Stomach (tissue), 19 donors: ENCODE measurements at regions of chr6 and their contacts with region 1.

Region 1: GRCh38 chr6:131116749-131117360 is 18.4 kb upstream of the AKAP7 start:
- DNase-seq: peak in 1 of 2 donors; percentile 53
- H3K4me3 ChIP-seq: no peak overlapping the region
- H3K27ac ChIP-seq: no peak overlapping the region
- H3K4me1 ChIP-seq: peaks cover 0 to 6% (median 2%) of the 10 kb centered on the region in 4 donors
- H3K27me3 ChIP-seq: no peaks in the 10 kb centered on the region
- CTCF ChIP-seq: peak in 5 of 7 experiments; percentile 11 to 66 (median 53)
- EP300 ChIP-seq: no peak
- POLR2A ChIP-seq: no peak

Region 2: GRCh38 chr6:130882370-130882769 is 234.5 kb before region 1 on chr6:
- intact Hi-C with region 1: loop called (anchors 5 kb)
- DNase-seq: peak in 1 of 2 donors; percentile 58
- H3K4me3 ChIP-seq: no peak overlapping the region
- H3K27ac ChIP-seq: no peak overlapping the region
- H3K4me1 ChIP-seq: peaks cover 0 to 5% (median 0%) of the 10 kb centered on the region in 4 donors
- H3K27me3 ChIP-seq: no peaks in the 10 kb centered on the region
- CTCF ChIP-seq: no peak
- EP300 ChIP-seq: no peak
- POLR2A ChIP-seq: no peak